ENCODE measurements at regions of chr18 and their contacts with region 1.

Region 1: GRCh38 chr18:59308248-59308937 is 10.1 kb downstream of the CPLX4 start:
- DNase-seq: peak; percentile 72
- H3K4me3 Mint-ChIP-seq: peak overlapping the region; percentile 28
- H3K27ac Mint-ChIP-seq: no peak overlapping the region
- H3K4me1 Mint-ChIP-seq: no peaks in the 10 kb centered on the region
- H3K27me3 Mint-ChIP-seq: peaks cover 30% of the 10 kb centered on the region
- CTCF ChIP-seq: peak; percentile 77

Region 2: DNA sequence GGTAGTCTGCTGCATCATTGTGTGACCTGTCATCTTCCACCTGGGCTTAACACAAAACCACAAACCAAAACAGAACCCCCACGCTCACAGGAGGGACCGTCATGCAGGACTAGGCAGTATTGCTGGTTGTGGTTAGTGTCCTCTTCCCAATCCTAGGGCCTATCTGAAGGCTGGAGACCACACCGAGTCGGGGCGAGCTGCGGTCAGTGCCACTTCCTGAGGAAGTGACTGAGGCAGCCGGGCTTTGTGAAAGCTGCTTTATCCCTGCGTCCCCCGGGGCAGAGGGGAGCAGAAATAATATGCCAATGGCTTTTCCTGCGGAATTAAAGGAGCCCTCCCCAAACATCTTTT is 420.8 kb before region 1 on chr18:
- CTCF ChIA-PET with region 1: no interaction called
- POLR2A ChIA-PET with region 1: no interaction called
- intact Hi-C with region 1: no loop called
- DNase-seq: peak; percentile 61
- H3K4me3 Mint-ChIP-seq: peak overlapping the region; percentile 52
- H3K27ac Mint-ChIP-seq: peak overlapping the region; percentile 93
- H3K4me1 Mint-ChIP-seq: peaks cover 18% of the 10 kb centered on the region
- H3K27me3 Mint-ChIP-seq: no peaks in the 10 kb centered on the region
- CTCF ChIP-seq: no peak

Region 3: DNA sequence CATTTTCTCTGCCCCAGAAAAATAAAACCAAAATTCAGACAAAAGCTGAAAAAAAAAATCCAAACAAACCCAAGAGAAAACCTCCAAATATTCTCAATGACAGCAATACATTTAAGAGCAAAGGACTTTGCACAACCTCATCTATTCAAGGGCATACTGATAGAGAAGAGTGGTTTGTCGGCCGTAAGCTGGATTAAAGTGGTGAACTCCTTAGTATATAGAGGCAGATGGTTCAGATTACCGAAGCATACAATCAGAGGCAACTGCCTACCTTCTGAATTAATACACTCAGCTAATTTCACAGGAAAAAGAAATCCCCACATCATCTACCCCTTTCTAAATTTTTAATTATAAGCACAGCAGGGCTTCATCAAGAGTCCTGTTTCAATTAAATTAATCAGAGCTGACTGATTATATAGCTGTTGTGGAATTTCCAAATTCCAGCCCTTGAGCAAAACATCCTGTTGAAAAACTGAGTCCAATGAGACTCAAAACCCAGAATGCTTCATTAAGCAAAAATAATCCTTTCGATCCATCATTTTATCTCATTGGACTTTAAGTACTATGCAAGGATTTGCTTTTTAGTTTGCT is 10.2 kb after region 1 on chr18 and contains the start of gene CPLX4:
- CTCF ChIA-PET with region 1: interaction called, 16 read pairs
- POLR2A ChIA-PET with region 1: interaction called, 4 read pairs
- intact Hi-C with region 1: no loop called
- DNase-seq: no peak
- H3K4me3 Mint-ChIP-seq: no peak within 1 kb of the TSS
- H3K27ac Mint-ChIP-seq: no peak within 1 kb of the TSS
- H3K4me1 Mint-ChIP-seq: no peaks in the 10 kb centered on the region
- H3K27me3 Mint-ChIP-seq: peaks cover 12% of the 10 kb centered on the region
- CTCF ChIP-seq: no peak
- total RNA-seq, gene CPLX4: not detected in 2 replicates

Region 4: GRCh38 chr18:59593291-59593717 is 284.9 kb after region 1 on chr18:
- CTCF ChIA-PET with region 1: no interaction called
- POLR2A ChIA-PET with region 1: no interaction called
- intact Hi-C with region 1: no loop called
- DNase-seq: no peak
- H3K4me3 Mint-ChIP-seq: no peak overlapping the region
- H3K27ac Mint-ChIP-seq: no peak overlapping the region
- H3K4me1 Mint-ChIP-seq: no peaks in the 10 kb centered on the region
- H3K27me3 Mint-ChIP-seq: no peaks in the 10 kb centered on the region
- CTCF ChIP-seq: no peak